GM18951 (cell line): ENCODE measurements at regions of chr11 and their contacts with region 1.

Region 1: GRCh38 chr11:95705485-95706124 is 84.0 kb downstream of the FAM76B start:
- POLR2A ChIP-seq: no peak

Region 2: GRCh38 chr11:95156916-95157541 is 548.6 kb before region 1 on chr11:
- in situ Hi-C with region 1: loop called (anchors 5 kb)
- POLR2A ChIP-seq: no peak

Region 3: DNA sequence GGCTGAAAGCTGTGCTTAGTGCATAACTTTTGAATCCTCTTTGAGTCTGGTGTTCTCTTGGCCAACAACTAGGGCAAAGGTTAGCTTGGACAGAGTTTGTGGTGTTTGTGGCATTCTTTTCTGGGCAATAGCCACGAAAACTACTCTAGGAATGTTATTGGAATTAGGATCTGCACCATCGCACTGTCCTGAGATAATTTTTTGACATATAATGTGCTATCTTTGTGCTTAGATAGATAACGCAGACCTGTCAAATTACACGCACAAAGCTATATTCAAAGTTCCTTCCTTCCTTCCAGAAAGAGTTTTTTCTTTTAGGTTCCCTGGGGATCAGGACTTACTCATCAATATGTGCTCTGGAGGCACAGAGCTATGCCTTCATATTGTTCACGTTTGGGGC is 385.1 kb after region 1 on chr11:
- in situ Hi-C with region 1: no loop called
- POLR2A ChIP-seq: no peak